ENCODE measurements at regions of chr7 and their contacts with region 1.

Region 1: GRCh38 chr7:135645296-135645904 is 16.9 kb upstream of the STMP1 start:
- DNase-seq: no peak
- H3K4me3 Mint-ChIP-seq: no peak overlapping the region
- H3K27ac Mint-ChIP-seq: no peak overlapping the region
- H3K4me1 Mint-ChIP-seq: no peaks in the 10 kb centered on the region
- H3K27me3 Mint-ChIP-seq: no peaks in the 10 kb centered on the region

Region 2: DNA sequence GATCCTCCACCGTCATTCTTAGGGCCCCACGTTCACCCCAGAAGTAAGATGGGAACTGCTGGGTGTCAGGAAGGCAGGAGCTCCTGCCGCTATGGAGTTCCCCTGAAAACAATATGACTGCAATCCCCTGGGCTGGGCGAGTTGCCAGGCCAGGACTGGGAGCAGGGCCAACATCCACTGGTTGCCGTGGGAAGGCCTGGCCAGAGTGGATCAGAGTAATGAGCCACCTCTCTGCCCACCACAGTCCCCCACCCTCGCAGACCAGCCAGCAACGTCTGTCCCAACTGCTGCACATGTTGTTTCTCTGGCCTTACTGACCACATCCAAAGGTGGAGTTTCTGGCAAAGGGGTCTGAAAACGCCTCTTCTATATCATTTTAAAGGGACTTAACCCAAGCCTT is 325.1 kb before region 1 on chr7:
- CTCF ChIA-PET with region 1: no interaction called
- intact Hi-C with region 1: no loop called
- DNase-seq: no peak
- H3K4me3 Mint-ChIP-seq: no peak overlapping the region
- H3K27ac Mint-ChIP-seq: no peak overlapping the region
- H3K4me1 Mint-ChIP-seq: no peaks in the 10 kb centered on the region
- H3K27me3 Mint-ChIP-seq: no peaks in the 10 kb centered on the region

Region 3: GRCh38 chr7:135575296-135575695 is 70.1 kb before region 1 on chr7:
- CTCF ChIA-PET with region 1: interaction called, 11 read pairs
- intact Hi-C with region 1: no loop called
- DNase-seq: no peak
- H3K4me3 Mint-ChIP-seq: no peak overlapping the region
- H3K27ac Mint-ChIP-seq: peak overlapping the region; percentile 16
- H3K4me1 Mint-ChIP-seq: peaks cover 12% of the 10 kb centered on the region
- H3K27me3 Mint-ChIP-seq: no peaks in the 10 kb centered on the region

Region 4: DNA sequence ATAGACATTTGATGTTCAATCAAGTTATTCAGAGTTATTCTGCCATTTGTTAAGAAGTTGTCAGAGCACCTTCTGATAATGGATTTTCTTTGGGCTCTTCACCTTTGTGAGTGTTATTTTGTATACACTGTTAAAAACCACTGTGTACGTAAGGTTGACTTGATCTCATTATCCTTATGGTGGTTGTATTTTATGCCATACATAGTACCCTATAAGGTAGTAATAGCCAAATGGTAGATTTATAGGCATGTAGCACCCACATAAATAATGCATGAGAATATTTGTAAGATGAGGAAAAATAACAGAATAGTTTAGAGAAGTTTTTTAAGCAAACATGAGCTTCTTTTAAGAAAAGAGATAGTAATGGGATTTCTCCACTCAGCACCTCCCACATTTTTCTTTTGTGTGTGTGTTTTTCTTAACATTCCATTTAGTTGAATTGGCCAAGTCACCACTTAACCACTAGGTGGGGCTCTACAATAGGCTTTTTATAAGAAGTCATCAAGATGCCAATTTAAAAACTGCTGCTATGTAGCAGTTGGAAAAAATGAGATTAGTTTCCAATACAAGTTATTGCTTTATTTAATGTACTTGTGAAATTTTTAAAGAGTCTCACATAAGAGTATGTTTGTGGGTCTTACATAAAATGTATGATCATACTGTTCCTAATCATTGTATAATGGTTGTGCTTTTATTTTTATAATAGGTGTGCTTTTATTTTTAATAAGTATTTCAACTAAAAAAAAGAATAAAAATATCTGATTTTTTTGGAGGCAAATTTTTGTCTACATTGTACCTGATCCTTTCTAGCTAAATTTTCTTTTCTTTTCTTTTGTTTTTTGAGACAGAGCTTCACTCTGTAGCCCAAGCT is 24.2 kb before region 1 on chr7:
- CTCF ChIA-PET with region 1: interaction called, 28 read pairs
- intact Hi-C with region 1: no loop called
- DNase-seq: peak; percentile 45
- H3K4me3 Mint-ChIP-seq: no peak overlapping the region
- H3K27ac Mint-ChIP-seq: no peak overlapping the region
- H3K4me1 Mint-ChIP-seq: no peaks in the 10 kb centered on the region
- H3K27me3 Mint-ChIP-seq: no peaks in the 10 kb centered on the region

Region 5: DNA sequence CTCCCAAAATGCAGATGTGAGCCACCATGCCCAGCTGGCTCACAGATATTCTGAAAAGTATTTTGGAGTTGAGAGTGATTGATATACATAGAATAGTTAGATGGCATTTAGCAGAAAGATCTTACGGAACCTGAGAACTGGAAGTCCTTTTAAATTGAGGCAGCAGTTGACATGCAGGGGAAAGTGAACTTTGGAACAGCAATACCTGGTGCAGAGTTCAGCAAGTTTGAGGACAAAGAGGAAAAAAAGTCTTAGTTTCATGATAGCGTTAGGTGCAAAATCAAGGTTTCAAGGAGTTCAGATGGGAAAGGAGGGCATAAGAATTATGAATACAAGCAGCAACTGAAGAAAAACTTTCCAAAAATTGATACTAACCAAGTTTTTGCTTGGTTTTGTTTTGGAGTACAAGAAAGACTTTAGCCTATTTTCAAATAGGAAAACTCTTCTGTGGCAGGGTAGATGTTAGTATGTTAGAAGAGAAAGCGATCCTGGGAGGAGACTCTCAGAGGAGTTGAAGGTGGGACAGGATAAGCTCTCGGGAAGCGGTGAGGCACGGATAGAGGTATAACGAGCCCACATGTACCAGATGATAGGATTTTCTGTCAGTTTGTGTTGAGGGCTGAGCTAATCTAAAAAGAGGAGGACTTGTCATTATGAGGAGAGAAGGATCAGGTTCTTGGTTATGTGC is 11.1 kb before region 1 on chr7:
- CTCF ChIA-PET with region 1: interaction called, 15 read pairs
- intact Hi-C with region 1: no loop called
- DNase-seq: no peak
- H3K4me3 Mint-ChIP-seq: no peak overlapping the region
- H3K27ac Mint-ChIP-seq: no peak overlapping the region
- H3K4me1 Mint-ChIP-seq: peaks cover 6% of the 10 kb centered on the region
- H3K27me3 Mint-ChIP-seq: no peaks in the 10 kb centered on the region

Region 6: GRCh38 chr7:135930565-135931461 is 285.4 kb after region 1 on chr7:
- CTCF ChIA-PET with region 1: no interaction called
- intact Hi-C with region 1: no loop called
- DNase-seq: no peak
- H3K4me3 Mint-ChIP-seq: no peak overlapping the region
- H3K27ac Mint-ChIP-seq: peak overlapping the region; percentile 14
- H3K4me1 Mint-ChIP-seq: peaks cover 21% of the 10 kb centered on the region
- H3K27me3 Mint-ChIP-seq: no peaks in the 10 kb centered on the region

Measured in activated naive CD4-positive, alpha-beta T cell treated with anti-CD3 and anti-CD28 coated beads for 36 hours (primary cell).